ENCODE measurements at regions of chrX and their contacts with region 1.

Region 1: DNA sequence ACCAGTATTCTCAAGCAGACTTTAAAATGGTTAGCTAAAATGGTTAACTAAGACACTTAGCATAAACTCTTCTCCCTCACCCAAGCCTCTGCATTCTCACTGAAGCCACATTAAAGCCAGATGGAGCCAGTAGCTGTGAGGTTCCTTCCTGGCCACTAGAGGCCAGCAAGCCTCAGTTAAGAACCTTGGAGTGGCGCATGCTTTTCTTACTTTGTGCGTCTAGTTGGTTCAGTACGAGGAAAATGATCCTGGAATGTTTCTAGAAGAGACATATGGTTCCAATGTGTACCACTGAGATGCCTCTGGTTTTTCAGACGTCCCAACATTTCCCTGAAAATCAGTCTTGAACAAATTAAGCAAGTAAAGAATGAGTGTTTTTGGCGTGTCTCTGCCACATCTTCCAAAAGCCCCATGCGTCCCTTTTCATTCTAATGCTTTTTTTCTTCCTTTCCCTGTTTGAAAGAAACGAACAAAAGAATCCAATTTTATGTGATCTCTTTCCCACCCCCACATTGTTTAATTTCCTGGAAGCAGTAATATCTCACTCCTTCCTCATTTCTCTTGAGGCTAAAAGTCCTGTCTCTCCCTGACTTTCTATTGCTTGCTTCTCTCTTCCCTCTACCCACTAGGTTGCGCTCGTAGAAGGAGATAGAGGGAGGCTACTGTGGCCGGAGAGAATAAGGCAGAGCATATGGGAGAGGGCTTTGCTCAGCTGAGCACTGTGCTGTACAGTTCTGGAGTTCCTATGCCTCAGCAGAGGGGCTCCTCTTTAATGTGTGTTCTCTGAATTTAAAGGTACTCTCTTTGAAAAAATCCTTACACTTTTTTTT is 82.9 kb upstream of the TAB3 start:
- DNase-seq: peak; percentile 23
- H3K4me3 Mint-ChIP-seq: peak overlapping the region; percentile 56
- H3K27ac Mint-ChIP-seq: no peak overlapping the region
- H3K4me1 Mint-ChIP-seq: peaks cover 12% of the 10 kb centered on the region
- H3K27me3 Mint-ChIP-seq: no peaks in the 10 kb centered on the region

Region 2: DNA sequence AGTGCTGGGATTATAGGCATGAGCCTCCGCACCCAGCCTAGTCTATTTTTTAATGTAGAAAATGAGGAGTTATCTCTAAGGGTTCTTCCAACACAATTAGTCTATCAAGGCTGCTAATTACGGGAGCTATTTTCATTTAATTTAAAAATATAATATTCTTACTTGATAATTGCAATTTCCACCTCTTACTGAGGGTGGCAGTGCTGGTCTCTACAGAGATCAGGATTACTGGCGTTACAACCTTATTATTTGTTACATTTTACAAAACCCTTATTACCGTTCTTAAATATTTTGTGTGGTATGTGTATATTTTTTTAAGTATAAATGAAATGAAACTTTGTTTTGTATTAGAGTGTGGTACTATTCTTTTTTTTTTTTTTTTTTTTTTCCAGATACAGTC is 336.4 kb before region 1 on chrX:
- CTCF ChIA-PET with region 1: no interaction called
- intact Hi-C with region 1: loop called (anchors 1 kb)
- DNase-seq: peak; percentile 19
- H3K4me3 Mint-ChIP-seq: no peak overlapping the region
- H3K27ac Mint-ChIP-seq: no peak overlapping the region
- H3K4me1 Mint-ChIP-seq: peaks cover 2% of the 10 kb centered on the region
- H3K27me3 Mint-ChIP-seq: no peaks in the 10 kb centered on the region

Region 3: GRCh38 chrX:31168551-31168950 is 196.6 kb after region 1 on chrX:
- CTCF ChIA-PET with region 1: no interaction called
- intact Hi-C with region 1: no loop called
- DNase-seq: no peak
- H3K4me3 Mint-ChIP-seq: no peak overlapping the region
- H3K27ac Mint-ChIP-seq: no peak overlapping the region
- H3K4me1 Mint-ChIP-seq: no peaks in the 10 kb centered on the region
- H3K27me3 Mint-ChIP-seq: peaks cover 3% of the 10 kb centered on the region

Region 4: GRCh38 chrX:31293409-31293808 is 321.4 kb after region 1 on chrX:
- CTCF ChIA-PET with region 1: no interaction called
- intact Hi-C with region 1: loop called (anchors 10 kb)
- DNase-seq: no peak
- H3K4me3 Mint-ChIP-seq: no peak overlapping the region
- H3K27ac Mint-ChIP-seq: no peak overlapping the region
- H3K4me1 Mint-ChIP-seq: no peaks in the 10 kb centered on the region
- H3K27me3 Mint-ChIP-seq: no peaks in the 10 kb centered on the region

Region 5: DNA sequence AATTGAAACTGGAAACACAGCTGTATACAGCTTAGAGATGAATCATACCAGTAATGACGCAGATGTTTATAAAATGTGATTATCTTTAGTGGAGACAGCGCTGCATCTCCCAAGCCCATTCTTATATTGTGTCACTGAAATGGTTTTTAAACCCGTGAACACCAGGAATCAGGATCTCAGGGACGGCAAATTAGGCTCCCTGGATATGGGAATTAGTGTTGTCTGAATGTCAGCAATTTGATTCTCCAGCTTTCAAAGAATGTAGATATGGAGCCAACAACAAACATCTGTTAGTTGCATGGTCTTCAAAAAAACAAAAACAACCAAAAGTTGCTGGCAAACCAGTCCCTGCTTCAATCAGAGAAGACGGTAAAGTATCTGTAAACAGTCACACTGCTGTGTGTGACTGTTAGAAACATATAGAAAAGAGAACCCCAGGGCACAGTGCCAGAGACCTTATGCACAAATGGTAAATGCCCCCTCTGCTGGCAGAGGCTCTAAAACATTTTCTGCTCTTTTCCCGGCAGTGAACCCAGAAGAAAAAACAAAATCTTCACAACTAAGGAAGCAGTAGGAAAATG is 451.7 kb after region 1 on chrX:
- CTCF ChIA-PET with region 1: no interaction called
- intact Hi-C with region 1: loop called (anchors 2 kb)
- DNase-seq: peak; percentile 23
- H3K4me3 Mint-ChIP-seq: no peak overlapping the region
- H3K27ac Mint-ChIP-seq: no peak overlapping the region
- H3K4me1 Mint-ChIP-seq: no peaks in the 10 kb centered on the region
- H3K27me3 Mint-ChIP-seq: no peaks in the 10 kb centered on the region

Region 6: GRCh38 chrX:31658360-31658759 is 686.4 kb after region 1 on chrX:
- CTCF ChIA-PET with region 1: no interaction called
- intact Hi-C with region 1: loop called (anchors 1 kb)
- DNase-seq: no peak
- H3K4me3 Mint-ChIP-seq: no peak overlapping the region
- H3K27ac Mint-ChIP-seq: no peak overlapping the region
- H3K4me1 Mint-ChIP-seq: no peaks in the 10 kb centered on the region
- H3K27me3 Mint-ChIP-seq: no peaks in the 10 kb centered on the region

Measured in activated naive CD4-positive, alpha-beta T cell treated with anti-CD3 and anti-CD28 coated beads for 36 hours (primary cell).